ENCODE measurements at regions of chr6 and their contacts with region 1.

Region 1: DNA sequence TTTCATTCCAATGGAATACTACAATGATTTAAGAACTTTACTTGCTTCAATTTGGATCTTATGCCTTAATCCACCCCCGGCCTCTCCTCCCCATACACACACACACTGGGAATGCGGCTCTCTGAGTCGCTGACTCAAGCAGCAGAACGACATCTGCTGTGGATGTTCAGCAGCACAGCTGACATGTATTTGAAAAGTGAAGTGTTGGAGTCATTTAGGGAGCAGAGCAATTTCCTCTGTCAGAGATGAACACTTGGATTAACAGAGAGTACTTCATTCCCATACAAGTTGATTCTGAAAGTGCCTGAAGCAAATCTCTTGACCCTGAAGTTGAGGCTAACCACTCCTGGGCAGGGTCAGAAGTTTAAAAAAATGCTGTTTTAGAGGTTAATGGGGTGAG is 27.9 kb upstream of the LAMA4 start:
- DNase-seq: no peak

Region 2: DNA sequence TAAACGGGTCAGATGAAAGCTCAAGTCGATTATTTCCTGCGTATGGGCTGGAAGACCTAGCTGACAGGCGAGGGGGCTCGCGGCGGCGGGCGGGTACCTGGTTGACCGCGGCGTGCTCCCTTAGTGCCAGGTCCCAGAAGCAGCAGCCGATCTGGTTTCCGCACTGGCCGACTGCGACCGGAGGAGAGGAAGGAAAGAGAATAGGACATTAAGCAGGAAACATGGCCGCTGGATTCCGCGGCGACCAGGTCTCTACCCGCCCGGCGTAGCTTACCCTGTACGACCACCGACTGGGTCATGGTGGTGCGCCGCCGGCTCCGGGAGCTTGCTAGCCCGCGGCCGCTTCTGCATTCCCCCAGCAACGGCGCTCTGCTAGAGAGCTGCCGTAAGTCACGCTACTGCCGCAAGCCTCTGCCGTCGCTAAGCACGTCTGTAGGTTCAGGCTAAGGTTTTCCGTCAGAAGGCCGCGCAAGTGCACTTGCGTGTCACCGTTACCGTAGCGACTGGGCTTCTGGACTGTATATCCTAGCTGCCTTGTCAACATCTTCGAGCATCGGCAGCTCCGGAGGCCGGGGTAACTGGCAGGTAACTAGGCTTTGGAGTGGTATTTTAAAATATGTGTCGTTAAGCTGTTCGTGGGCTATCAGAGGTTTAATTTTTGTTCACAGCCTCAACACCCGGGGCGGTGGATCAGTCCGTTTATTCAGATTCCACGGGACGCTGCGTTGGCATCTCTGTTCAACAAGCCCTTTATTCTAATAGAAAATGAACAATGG is 194.9 kb before region 1 on chr6 and contains the starts of genes FAM229B and TUBE1:
- intact Hi-C with region 1: loop called (anchors 10 kb)
- DNase-seq: peak; percentile 97
- total RNA-seq, gene FAM229B: 43.5 TPM
- total RNA-seq, gene TUBE1: 21.6 TPM